Dorsolateral prefrontal cortex (tissue), 120 donors: ENCODE measurements at regions of chr12 and their contacts with region 1.

Region 1: DNA sequence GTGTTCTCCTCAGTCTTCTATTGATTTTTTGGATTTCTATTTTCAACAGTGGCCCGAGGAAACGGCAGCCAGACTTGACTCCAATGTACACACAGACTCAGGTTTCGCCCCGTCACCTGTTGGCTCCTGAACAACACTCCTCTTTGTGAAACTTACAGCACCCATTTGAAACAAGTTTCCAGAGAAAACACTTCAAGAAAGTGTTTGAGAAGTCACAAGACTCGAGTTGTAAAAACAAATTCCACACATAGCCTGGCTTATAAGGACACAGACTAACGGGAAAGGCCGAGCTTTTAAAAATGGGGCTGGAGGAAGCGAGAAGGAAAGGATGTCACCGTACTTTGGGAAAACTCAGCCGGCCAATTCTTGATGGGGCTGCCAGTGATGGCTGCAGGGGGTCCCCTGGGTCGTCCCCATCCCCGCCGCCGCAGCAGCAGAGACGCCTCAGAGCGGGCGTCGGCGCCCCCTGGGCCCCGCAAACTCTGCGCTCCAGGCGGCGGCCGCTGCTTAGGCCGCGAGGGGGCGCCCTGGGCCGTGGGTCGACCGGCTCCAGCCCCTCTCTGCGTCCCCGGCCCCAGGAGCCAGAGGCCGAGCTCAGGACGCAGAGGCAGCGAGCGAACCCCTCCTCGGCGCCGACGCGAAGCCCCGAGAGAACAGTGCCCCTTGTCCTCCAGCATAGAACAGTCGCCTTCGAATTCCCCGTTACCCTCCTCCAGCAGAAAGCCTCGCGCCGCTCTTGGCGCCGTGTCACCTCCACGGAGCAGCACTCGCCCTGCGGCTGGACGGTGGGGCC is 106.9 kb downstream of the PRICKLE1 start:
- DNase-seq: peak in 8 of 10 donors; percentile 22 to 78 (median 48)
- H3K4me3 ChIP-seq: peak overlapping the region; percentile 51 to 87 (median 72)
- H3K27ac ChIP-seq: peak overlapping the region in 54 of 59 donors; percentile 15 to 90 (median 72)
- H3K27me3 ChIP-seq: peaks cover 0 to 52% (median 0%) of the 10 kb centered on the region in 45 donors
- CTCF ChIP-seq: peak; percentile 44 to 95 (median 78)

Region 2: GRCh38 chr12:42346403-42347002 is 136.1 kb before region 1 on chr12:
- intact Hi-C with region 1: no loop called
- DNase-seq: no peak
- H3K4me3 ChIP-seq: no peak overlapping the region
- H3K27ac ChIP-seq: no peak overlapping the region
- H3K27me3 ChIP-seq: no peaks in the 10 kb centered on the region
- CTCF ChIP-seq: no peak

Region 3: GRCh38 chr12:42541965-42542364 is 59.3 kb after region 1 on chr12:
- intact Hi-C with region 1: no loop called
- DNase-seq: no peak
- H3K4me3 ChIP-seq: no peak overlapping the region
- H3K27ac ChIP-seq: no peak overlapping the region
- H3K27me3 ChIP-seq: peaks cover 0 to 3% (median 0%) of the 10 kb centered on the region in 45 donors
- CTCF ChIP-seq: no peak

Region 4: GRCh38 chr12:42568952-42569915 is 86.6 kb after region 1 on chr12:
- intact Hi-C with region 1: loop called (anchors 5 kb)
- DNase-seq: no peak
- H3K4me3 ChIP-seq: no peak overlapping the region
- H3K27ac ChIP-seq: no peak overlapping the region
- H3K27me3 ChIP-seq: no peaks in the 10 kb centered on the region
- CTCF ChIP-seq: peak; percentile 18 to 80 (median 56)

Region 5: DNA sequence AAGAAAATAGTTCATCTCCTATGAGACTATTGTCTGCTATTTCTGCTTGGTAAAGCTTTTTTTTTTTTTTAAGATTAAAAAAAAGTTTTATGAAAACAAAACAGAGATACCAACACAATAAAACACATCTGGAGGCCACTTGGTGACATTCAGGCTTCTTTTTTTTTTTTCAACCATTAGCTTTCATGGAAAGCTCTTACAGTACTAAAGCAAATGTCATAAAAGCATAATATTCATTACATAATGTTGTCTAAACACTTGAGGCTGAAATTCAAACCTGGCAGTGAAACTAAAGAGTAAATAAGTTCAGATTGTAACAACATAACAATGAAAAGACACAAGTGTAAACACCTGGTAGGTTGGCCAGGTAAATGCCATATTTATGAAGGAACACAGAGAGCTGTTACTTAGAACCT is 92.2 kb after region 1 on chr12:
- intact Hi-C with region 1: loop called in 1 of 2 experiments (anchors 5 kb)
- DNase-seq: no peak
- H3K4me3 ChIP-seq: no peak overlapping the region
- H3K27ac ChIP-seq: no peak overlapping the region
- H3K27me3 ChIP-seq: peaks cover 0 to 16% (median 0%) of the 10 kb centered on the region in 45 donors
- CTCF ChIP-seq: no peak

Region 6: DNA sequence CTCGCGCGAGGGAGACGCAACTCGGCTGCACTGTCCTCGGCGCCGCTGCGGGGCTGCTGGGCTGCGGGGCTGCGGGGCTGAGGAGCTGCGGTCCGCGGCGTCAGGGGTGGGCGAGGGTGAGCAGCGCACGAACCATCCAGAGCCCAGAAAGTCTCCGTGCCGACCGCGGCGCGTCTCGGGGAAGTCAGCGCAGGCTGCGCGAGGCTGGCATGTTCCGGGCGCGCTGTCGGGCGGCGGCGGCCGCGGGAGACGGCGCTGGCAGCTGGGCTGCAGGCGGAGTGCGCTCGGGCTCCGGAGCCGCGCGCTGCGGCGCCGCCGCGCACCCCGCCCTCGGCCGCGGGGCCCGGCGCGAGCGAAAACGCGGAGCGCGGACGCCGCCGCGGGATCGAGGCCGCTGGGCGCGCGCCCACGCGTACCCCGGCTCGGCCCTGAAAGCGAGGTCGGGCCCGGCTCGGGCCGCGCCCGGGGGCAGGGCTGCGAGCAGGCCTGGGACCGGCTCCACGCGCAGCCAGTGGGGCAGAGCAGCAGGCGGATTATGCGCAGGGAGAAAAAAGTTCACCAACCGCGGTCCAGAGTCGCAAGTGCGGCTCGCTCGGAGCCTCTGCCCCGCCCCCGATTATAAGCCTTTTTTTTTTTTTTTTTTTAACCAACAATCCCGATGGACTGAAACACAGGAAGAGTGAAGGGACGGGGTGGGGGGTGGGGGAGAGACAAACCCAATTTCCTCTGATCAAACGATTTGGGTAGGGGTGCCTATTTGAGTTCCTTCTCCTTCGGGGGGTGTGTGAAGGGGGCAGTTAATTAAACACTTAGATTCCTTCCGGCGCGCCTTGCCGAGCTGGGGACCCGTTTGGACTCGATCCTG is 107.1 kb after region 1 on chr12 and contains the start of gene PRICKLE1:
- intact Hi-C with region 1: loop called in 1 of 2 experiments (anchors 5 kb)
- DNase-seq: peak in 3 of 10 donors; percentile 47 to 66 (median 54)
- H3K4me3 ChIP-seq: peak within 1 kb of the TSS; percentile 50 to 85 (median 70)
- H3K27ac ChIP-seq: peak within 1 kb of the TSS in 57 of 59 donors; percentile 31 to 94 (median 86)
- H3K27me3 ChIP-seq: peaks cover 0 to 67% (median 5%) of the 10 kb centered on the region in 45 donors
- CTCF ChIP-seq: no peak
- total RNA-seq, gene PRICKLE1: 9.9 to 57.6 (median 40.2) TPM